CD8-positive, alpha-beta T cell (primary cell): ENCODE measurements at regions of chr3 and their contacts with region 1.

Region 1: DNA sequence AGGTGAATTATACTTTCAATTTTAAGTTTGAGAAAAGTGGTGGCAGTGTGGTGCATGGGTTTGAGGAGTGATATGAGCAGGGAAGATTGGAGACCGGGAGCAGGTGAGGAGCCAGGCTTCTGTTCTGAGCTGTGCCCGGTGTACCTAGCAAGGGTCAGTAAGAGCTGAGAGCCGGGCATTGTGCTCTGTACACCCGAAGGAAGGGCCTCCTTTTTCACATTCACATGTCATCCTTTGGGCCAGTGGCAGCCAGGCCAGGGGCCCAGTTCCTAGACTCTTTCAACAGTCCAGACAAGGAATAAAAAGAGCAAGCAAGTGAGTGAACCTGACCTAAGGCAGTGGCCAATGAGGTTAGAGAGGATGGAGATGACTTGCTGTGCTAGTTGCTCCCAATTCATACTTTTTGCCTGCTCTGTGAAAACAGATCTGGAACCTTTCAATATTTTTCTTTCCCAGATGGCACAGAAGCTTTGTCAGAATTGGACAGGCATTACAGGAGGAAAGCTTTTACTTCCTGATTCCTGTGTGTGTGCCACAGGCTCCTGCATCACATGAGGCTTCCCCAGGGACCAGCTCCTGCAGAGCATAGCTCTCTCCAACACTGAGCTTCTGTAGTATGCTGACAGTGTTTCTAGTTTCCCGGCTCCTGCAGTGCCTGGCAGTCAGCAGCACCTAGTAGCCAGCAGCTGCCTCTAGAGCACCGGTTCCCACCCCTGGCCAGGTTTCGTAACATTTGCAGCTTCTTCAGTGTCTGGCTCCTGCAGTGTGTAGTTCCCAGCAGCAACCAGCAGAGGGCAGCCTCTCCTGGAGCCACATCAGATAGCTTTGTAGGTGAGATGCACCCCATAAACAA is 5.3 kb upstream of the TRA2B start:
- DNase-seq: peak; percentile 70 to 90 (median 85)
- ATAC-seq: peak; percentile 100
- H3K4me3 ChIP-seq: no peak overlapping the region
- H3K4me3 Mint-ChIP-seq: peak overlapping the region; percentile 61
- H3K27ac ChIP-seq: no peak overlapping the region
- H3K27ac Mint-ChIP-seq: peak overlapping the region; percentile 72
- H3K4me1 ChIP-seq: peaks cover 8% of the 10 kb centered on the region
- H3K4me1 Mint-ChIP-seq: peaks cover 15% of the 10 kb centered on the region
- H3K27me3 ChIP-seq: peaks cover 0 to 2% of the 10 kb centered on the region in 2 experiments
- H3K27me3 Mint-ChIP-seq: peaks cover 2% of the 10 kb centered on the region
- CTCF ChIP-seq: peak; percentile 98

Region 2: GRCh38 chr3:185912929-185913901 is 29.9 kb before region 1 on chr3:
- CTCF ChIA-PET with region 1: interaction called, 13 read pairs
- POLR2A ChIA-PET with region 1: interaction called, 11 read pairs
- intact Hi-C with region 1: no loop called
- DNase-seq: no peak
- ATAC-seq: peak; percentile 18
- H3K4me3 ChIP-seq: no peak overlapping the region
- H3K4me3 Mint-ChIP-seq: no peak overlapping the region
- H3K27ac ChIP-seq: no peak overlapping the region
- H3K27ac Mint-ChIP-seq: peak overlapping the region; percentile 13
- H3K4me1 ChIP-seq: no peaks in the 10 kb centered on the region
- H3K4me1 Mint-ChIP-seq: peaks cover 6% of the 10 kb centered on the region
- H3K27me3 ChIP-seq: no peaks in the 10 kb centered on the region
- H3K27me3 Mint-ChIP-seq: no peaks in the 10 kb centered on the region
- CTCF ChIP-seq: no peak

Region 3: DNA sequence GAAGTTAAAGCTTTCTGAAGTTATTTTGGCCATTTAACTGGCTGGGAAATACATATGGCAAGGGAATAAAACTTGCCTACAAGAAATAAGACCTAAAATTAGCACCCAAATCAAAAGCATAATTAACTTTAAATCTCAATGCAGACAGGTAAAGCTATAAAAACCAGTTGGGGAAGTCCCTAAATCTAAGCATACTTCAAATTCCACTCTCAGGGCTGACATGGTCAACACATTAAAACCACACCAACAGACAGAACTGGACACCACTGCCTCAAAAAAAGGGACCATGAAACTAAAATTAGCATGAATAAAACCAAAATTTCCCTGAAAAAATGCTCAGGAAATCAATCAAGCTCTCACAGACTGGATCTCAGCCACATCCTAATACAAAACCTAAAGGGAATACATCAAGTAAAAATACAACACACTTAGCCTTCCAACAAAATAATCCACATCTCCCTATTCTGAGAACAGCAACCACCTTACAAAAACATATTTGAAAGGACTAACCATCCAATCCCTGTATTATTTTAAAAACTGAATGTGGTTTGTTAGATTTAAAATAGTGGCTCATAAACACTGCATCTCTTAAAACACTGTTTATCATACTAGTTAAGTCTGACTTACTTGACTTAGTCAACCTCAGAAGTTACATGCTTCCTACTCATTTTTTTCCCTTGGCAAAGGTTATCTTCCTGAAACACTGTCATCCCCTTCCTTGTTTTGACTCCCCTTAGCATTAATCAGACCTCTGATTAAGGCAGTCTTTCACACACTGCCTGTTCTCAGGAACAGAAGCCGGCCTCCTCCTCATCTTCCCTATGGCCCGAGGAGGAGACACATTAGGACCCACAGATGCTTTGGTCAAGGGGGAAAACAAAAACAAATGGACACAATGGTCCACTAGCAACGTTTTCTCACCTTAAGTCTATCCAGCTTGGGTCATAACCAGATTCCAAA is 13.7 kb before region 1 on chr3:
- CTCF ChIA-PET with region 1: interaction called, 25 read pairs
- POLR2A ChIA-PET with region 1: interaction called, 85 read pairs
- intact Hi-C with region 1: no loop called
- DNase-seq: no peak
- ATAC-seq: no peak
- H3K4me3 ChIP-seq: no peak overlapping the region
- H3K4me3 Mint-ChIP-seq: peak overlapping the region; percentile 100
- H3K27ac ChIP-seq: peak overlapping the region in 1 of 2 experiments; percentile 65
- H3K27ac Mint-ChIP-seq: peak overlapping the region; percentile 68
- H3K4me1 ChIP-seq: peaks cover 79% of the 10 kb centered on the region
- H3K4me1 Mint-ChIP-seq: peaks cover 97% of the 10 kb centered on the region
- H3K27me3 ChIP-seq: no peaks in the 10 kb centered on the region
- H3K27me3 Mint-ChIP-seq: no peaks in the 10 kb centered on the region
- CTCF ChIP-seq: no peak

Region 4: DNA sequence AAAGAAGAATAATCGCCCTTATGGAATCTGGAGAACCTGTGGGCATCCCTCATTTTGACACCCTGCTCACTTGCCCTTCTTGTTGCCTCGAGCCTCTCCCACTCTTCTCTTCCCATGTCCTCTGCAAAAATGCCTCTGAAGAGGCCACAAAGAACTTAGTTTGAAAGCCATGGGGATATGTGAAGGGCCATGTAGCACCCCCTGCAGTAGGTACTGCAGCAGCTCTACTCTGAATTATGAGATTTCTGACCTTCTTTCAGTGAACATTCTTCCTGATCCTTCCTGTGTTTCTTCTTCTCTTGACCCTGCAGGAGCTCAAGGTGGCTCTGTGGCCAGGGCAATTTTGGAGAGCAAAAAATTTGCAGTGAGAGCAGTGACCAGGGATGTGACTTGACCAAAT is 25.0 kb after region 1 on chr3:
- CTCF ChIA-PET with region 1: interaction called, 15 read pairs
- POLR2A ChIA-PET with region 1: no interaction called
- intact Hi-C with region 1: no loop called
- DNase-seq: no peak
- ATAC-seq: no peak
- H3K4me3 ChIP-seq: no peak overlapping the region
- H3K4me3 Mint-ChIP-seq: no peak overlapping the region
- H3K27ac ChIP-seq: no peak overlapping the region
- H3K27ac Mint-ChIP-seq: no peak overlapping the region
- H3K4me1 ChIP-seq: no peaks in the 10 kb centered on the region
- H3K4me1 Mint-ChIP-seq: no peaks in the 10 kb centered on the region
- H3K27me3 ChIP-seq: no peaks in the 10 kb centered on the region
- H3K27me3 Mint-ChIP-seq: no peaks in the 10 kb centered on the region
- CTCF ChIP-seq: no peak

Region 5: DNA sequence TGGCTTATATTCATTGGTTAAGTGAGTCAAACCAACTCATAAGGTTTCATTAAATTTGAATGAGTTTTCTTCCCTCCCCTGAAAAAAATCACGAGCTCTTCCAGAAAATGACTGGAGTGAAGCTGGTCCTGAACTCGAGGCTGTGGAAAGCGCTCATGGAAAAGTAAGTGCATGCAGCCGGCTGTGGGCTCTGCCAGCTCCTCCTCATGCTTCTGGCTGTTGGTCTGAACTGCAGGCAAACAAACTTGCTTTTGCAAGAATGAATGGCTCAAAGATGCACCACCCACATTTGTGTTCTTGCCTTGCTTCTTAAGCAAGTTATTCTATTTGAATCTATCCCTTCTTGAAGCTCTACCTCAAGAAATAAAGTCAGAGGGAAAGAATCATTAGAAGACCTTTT is 159.6 kb after region 1 on chr3:
- CTCF ChIA-PET with region 1: no interaction called
- POLR2A ChIA-PET with region 1: no interaction called
- intact Hi-C with region 1: loop called in 1 of 2 experiments (anchors 5 kb)
- DNase-seq: no peak
- ATAC-seq: no peak
- H3K4me3 ChIP-seq: no peak overlapping the region
- H3K4me3 Mint-ChIP-seq: no peak overlapping the region
- H3K27ac ChIP-seq: no peak overlapping the region
- H3K27ac Mint-ChIP-seq: no peak overlapping the region
- H3K4me1 ChIP-seq: peaks cover 7% of the 10 kb centered on the region
- H3K4me1 Mint-ChIP-seq: peaks cover 8% of the 10 kb centered on the region
- H3K27me3 ChIP-seq: peaks cover 5 to 10% of the 10 kb centered on the region in 2 experiments
- H3K27me3 Mint-ChIP-seq: peaks cover 53% of the 10 kb centered on the region
- CTCF ChIP-seq: no peak

Region 6: DNA sequence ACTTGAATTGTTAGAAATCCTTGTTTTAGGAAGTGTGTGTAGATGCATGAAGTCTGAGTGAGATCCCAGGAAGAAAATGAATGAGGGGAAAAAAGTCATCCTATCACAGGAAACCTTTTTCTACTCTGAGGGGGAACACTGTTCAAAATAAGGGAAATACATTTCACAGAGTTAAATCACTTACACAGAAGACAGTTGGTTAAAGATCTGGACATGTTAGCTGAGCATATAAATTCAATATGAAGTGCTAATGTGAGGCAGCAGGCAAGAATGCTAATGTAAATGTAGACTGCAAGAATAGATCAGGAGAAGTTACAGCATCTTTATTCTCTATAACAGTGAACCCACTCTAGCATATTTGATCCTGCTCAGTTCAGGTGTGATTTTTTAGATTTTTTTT is 621.5 kb after region 1 on chr3:
- CTCF ChIA-PET with region 1: interaction called, 10 read pairs
- POLR2A ChIA-PET with region 1: interaction called, 27 read pairs
- intact Hi-C with region 1: loop called (anchors 1 to 2 kb)
- DNase-seq: no peak
- ATAC-seq: no peak
- H3K4me3 ChIP-seq: no peak overlapping the region
- H3K4me3 Mint-ChIP-seq: no peak overlapping the region
- H3K27ac ChIP-seq: no peak overlapping the region
- H3K27ac Mint-ChIP-seq: no peak overlapping the region
- H3K4me1 ChIP-seq: peaks cover 38% of the 10 kb centered on the region
- H3K4me1 Mint-ChIP-seq: peaks cover 77% of the 10 kb centered on the region
- H3K27me3 ChIP-seq: no peaks in the 10 kb centered on the region
- H3K27me3 Mint-ChIP-seq: no peaks in the 10 kb centered on the region
- CTCF ChIP-seq: no peak

Region 7: DNA sequence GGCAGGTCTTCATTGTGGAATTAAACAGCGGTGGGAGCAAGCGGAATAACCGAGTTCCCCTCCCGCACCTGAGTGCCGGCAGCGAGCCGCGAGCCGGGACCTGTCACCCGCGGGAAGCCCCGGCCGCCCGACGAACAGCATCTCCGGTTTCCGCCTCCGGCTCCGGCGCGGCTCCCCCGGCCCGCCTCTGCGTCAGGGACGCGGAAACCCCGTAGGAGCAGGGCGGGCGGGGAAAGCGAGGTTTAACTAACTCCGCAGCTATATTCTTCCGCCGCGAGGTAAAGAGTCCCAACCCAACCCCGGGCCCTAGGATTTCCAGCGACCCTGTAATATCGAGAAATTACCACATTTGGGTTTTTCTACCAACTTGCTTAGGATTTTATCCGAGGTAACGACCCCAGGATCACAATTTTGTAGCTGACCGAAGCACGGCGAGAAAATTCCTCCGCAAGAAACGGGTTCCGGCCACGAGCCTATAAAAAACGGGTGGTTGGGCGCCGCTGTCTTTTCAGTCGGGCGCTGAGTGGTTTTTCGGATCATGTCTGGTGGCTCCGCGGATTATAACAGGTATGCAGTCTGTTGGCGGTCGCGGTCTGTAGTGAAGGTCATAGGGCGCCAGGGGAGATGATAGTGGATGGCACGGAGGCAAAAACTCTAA is 840.1 kb after region 1 on chr3 and contains the start of gene EIF4A2:
- CTCF ChIA-PET with region 1: no interaction called
- POLR2A ChIA-PET with region 1: interaction called, 30 read pairs
- intact Hi-C with region 1: loop called in 1 of 2 experiments (anchors 1 kb)
- DNase-seq: peak; percentile 79 to 96 (median 88)
- ATAC-seq: peak; percentile 67
- H3K4me3 ChIP-seq: peak within 1 kb of the TSS; percentile 90 to 95
- H3K4me3 Mint-ChIP-seq: peak within 1 kb of the TSS; percentile 99
- H3K27ac ChIP-seq: peak within 1 kb of the TSS; percentile 93 to 97
- H3K27ac Mint-ChIP-seq: peak within 1 kb of the TSS; percentile 99
- H3K4me1 ChIP-seq: peaks cover 38% of the 10 kb centered on the region
- H3K4me1 Mint-ChIP-seq: peaks cover 52% of the 10 kb centered on the region
- H3K27me3 ChIP-seq: no peaks in the 10 kb centered on the region
- H3K27me3 Mint-ChIP-seq: no peaks in the 10 kb centered on the region
- CTCF ChIP-seq: no peak
- total RNA-seq, gene EIF4A2: 934 to 978 TPM